ENCODE measurements at regions of chr2 and their contacts with region 1.

Region 1: DNA sequence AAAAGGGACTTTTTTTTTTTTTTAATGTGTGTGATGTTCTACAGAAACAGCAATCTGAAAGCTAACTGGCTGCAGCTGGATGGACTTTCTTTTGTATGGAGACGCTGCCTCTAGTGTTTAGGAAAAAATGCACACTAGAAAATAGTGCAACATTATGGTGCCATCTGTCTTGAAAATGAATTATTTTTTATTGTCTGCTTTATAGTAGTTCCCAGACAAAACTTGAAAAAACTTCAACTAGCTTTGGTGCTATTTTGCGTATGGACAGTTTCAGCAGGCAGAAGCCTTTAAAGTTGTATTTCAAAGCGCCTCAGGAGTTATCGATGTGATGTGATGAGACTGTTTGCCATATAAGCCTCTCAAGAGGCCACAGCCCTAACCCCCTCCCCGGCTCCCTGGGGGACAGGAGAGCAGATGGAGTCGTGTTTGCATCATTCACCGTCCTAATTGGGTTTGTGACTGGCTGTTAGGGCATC is 86.9 kb downstream of the LTBP1 start:
- DNase-seq: no peak
- H3K4me3 ChIP-seq: peak overlapping the region; percentile 30 to 55 (median 46)
- H3K27ac ChIP-seq: peak overlapping the region; percentile 67 to 78 (median 75)
- H3K4me1 ChIP-seq: peaks cover 0 to 36% (median 14%) of the 10 kb centered on the region in 4 donors
- H3K27me3 ChIP-seq: no peaks in the 10 kb centered on the region
- CTCF ChIP-seq: peak; percentile 43 to 56 (median 50)
- EP300 ChIP-seq: no peak
- POLR2A ChIP-seq: no peak

Region 2: DNA sequence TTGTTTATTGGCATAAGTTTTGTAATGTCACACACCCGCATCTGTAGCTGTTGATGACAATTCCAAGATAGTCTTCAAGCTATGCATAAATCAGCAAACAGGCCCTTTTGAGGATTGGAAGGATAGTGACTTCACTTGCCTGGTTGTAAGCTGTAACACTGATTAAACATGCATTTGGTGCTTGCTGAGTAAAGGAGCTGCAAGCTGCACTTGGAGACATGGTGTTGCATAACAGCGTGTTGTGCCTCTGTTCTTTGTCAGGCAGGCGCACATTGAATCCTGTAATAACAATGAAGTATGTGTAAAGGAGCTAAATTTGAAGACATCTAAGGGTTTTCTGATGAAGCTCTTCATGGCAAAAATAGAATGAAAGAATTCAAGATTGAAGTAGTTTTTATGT is 474.5 kb before region 1 on chr2:
- intact Hi-C with region 1: loop called (anchors 5 kb)
- DNase-seq: peak; percentile 72
- H3K4me3 ChIP-seq: no peak overlapping the region
- H3K27ac ChIP-seq: peak overlapping the region in 3 of 4 donors; percentile 49 to 61 (median 52)
- H3K4me1 ChIP-seq: peaks cover 0 to 23% (median 14%) of the 10 kb centered on the region in 4 donors
- H3K27me3 ChIP-seq: no peaks in the 10 kb centered on the region
- CTCF ChIP-seq: no peak
- EP300 ChIP-seq: no peak
- POLR2A ChIP-seq: no peak

Region 3: DNA sequence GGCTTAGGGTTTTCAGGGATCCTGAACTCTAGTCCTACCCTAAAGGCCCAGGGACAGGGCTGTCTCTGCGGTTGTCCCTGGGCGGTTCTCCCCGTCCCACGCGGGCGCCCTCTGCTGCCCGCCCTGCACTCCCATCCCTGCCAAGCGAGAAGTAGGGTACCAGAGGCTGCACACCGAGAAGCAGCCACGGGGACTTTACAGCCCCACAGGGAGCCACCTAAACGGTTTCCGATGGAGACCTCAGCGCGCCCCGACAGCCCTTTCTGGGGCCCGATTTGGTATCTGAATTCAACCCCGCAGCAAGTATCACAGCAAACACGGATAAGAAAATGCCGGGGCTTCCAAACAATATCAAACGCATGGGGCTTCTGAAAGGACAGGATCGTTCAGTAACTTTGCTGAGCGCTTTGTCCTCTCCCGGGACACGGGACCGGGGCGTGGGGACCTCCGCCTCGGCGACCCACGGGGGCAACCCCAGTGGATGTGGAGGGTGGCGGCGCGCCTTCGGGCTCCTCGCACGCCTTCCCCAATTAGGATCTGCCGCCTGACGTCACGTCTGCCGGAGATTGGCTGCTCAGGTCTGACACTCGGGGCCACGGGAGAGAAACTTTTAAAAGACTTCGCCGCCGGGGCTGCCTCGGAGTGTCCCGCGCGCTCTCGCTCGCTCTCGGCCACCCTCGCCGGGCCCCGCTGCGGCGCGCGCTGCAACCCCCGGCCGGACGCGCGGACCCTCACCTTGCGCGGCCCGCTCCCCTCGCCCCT is 87.1 kb before region 1 on chr2 and contains the start of gene LTBP1:
- intact Hi-C with region 1: loop called (anchors 5 kb)
- DNase-seq: peak; percentile 88
- H3K4me3 ChIP-seq: peak within 1 kb of the TSS; percentile 41 to 97 (median 80)
- H3K27ac ChIP-seq: peak within 1 kb of the TSS; percentile 89 to 95 (median 92)
- H3K4me1 ChIP-seq: peaks cover 0 to 13% (median 5%) of the 10 kb centered on the region in 4 donors
- H3K27me3 ChIP-seq: no peaks in the 10 kb centered on the region
- CTCF ChIP-seq: peak; percentile 20 to 66 (median 54)
- EP300 ChIP-seq: no peak
- POLR2A ChIP-seq: no peak
- total RNA-seq, gene LTBP1: 34.2 to 102 (median 55.2) TPM

Region 4: GRCh38 chr2:33267756-33268155 is 234.1 kb after region 1 on chr2:
- intact Hi-C with region 1: loop called (anchors 5 kb)
- DNase-seq: no peak
- H3K4me3 ChIP-seq: no peak overlapping the region
- H3K27ac ChIP-seq: peak overlapping the region in 2 of 4 donors; percentile 17 to 40
- H3K4me1 ChIP-seq: peaks cover 0 to 34% (median 18%) of the 10 kb centered on the region in 4 donors
- H3K27me3 ChIP-seq: no peaks in the 10 kb centered on the region
- CTCF ChIP-seq: no peak
- EP300 ChIP-seq: no peak
- POLR2A ChIP-seq: no peak

Region 5: DNA sequence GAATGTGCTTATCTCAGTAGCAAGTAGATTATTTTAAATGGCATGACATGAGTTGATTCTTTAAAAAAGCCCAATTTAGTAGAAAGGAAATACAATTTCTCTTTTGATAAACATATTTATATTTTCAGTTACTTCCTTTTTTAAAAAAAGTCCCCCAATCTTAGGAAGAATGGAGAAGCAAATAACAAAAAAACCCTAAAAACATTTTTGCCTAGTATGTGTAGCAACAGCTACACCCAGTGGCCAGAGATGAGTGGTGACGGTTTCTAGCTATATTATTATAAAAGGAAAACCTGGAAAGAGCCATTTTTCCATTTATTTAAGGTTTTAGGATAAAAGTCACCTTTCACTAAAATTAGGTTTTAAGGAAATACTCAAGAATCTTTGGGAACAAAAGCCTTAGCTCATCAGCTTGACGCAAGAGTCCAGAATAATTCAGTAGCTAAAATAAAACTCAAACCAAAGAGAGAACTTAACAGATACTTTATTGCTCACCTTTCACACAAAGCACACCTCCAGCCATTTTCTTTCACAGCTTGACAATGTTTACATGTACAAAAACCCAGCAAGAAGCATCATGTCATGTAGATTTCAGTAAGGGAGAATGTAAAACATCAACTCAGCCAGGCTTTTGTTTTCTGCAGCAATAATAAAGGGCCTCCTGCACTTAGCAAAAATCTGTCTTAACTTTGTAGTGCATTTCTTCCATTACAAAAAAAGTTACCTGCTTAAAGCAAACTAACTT is 549.7 kb after region 1 on chr2:
- intact Hi-C with region 1: loop called (anchors 5 kb)
- DNase-seq: no peak
- H3K4me3 ChIP-seq: no peak overlapping the region
- H3K27ac ChIP-seq: peak overlapping the region in 1 of 4 donors; percentile 18
- H3K4me1 ChIP-seq: peaks cover 0 to 22% (median 10%) of the 10 kb centered on the region in 4 donors
- H3K27me3 ChIP-seq: no peaks in the 10 kb centered on the region
- CTCF ChIP-seq: peak; percentile 39 to 73 (median 62)
- EP300 ChIP-seq: no peak
- POLR2A ChIP-seq: no peak